ENCODE measurements at regions of chr6 and their contacts with region 1.

Region 1: DNA sequence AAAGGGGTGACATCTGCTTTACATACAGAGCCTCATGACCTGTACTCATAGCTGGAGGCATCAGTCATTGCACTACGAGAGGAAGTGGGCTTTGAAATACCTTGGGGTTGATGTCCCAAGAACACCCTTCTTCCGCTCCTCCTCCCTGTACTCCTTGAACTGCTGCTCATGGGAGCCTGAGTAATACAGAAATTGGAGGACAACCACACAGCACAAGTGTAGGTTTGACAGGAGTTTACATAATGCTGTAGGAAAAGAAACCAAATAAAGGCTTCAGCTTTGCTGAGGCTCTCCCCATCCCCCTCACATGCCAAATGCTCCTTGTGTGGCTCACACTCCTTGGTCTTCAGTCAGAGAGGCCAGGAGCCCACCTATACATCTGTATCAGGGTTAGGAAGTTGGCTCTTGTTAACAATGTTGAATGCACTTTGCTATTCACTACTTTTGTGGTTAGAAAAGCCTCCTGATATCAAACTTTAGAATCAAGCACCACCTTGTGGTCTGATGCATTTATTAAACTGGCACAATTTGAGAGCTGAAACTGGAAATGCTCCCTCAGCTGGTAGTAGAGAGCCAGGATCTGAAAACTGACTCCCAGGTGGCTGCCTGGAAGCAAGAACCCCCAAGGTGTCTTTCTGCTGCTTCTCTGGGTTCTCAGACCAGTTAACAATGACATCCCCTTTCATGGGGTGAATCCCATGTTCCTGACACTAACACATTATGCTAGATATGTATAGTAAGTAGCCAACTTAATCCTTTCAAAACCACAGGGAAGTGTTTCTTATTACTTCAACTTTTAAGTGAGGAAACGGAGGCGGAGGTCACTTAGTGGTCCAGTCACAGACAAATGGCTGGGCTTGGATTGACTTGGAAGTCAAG is 56.2 kb upstream of the EDN1 start:
- DNase-seq: peak; percentile 75
- ATAC-seq: peak; percentile 77
- H3K4me3 ChIP-seq: no peak overlapping the region
- H3K4me3 Mint-ChIP-seq: no peak overlapping the region
- H3K27ac ChIP-seq: no peak overlapping the region
- H3K27ac Mint-ChIP-seq: no peak overlapping the region
- H3K4me1 ChIP-seq: peaks cover 0 to 5% of the 10 kb centered on the region in 2 donors
- H3K4me1 Mint-ChIP-seq: peaks cover 10% of the 10 kb centered on the region
- H3K27me3 ChIP-seq: no peaks in the 10 kb centered on the region
- H3K27me3 Mint-ChIP-seq: no peaks in the 10 kb centered on the region
- CTCF ChIP-seq: peak; percentile 77

Region 2: DNA sequence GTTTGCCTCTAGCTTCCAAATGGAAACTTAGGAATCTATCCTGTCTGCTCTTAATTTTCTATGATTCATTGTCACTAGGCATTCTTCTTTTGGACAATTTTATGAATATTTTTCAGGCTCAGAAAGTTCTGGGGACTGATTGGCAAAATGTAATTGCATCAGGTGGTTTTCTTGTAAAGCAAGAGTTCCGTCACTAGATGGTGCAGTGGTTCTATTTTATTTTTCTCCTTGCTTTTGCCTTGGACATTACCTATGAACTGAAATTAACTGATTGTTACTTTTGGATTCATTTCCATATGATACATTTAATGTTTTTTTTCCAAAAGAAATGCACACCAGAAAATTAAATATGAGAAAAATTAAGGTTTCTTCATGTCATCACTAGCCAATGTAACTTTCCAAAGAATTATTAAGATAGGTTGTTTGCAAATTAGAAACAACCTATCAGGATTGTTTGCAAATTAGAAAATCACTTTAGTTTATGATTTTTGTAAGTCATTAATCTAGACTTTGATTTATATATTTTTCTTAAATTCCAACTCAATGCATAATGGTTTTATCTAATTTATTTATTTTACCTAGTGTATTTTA is 648.4 kb before region 1 on chr6:
- CTCF ChIA-PET with region 1: interaction called, 3 read pairs
- POLR2A ChIA-PET with region 1: no interaction called
- intact Hi-C with region 1: loop called (anchors 1 kb)
- DNase-seq: peak; percentile 28
- ATAC-seq: no peak
- H3K4me3 ChIP-seq: no peak overlapping the region
- H3K4me3 Mint-ChIP-seq: no peak overlapping the region
- H3K27ac ChIP-seq: no peak overlapping the region
- H3K27ac Mint-ChIP-seq: no peak overlapping the region
- H3K4me1 ChIP-seq: no peaks in the 10 kb centered on the region
- H3K4me1 Mint-ChIP-seq: no peaks in the 10 kb centered on the region
- H3K27me3 ChIP-seq: no peaks in the 10 kb centered on the region
- H3K27me3 Mint-ChIP-seq: peaks cover 4% of the 10 kb centered on the region
- CTCF ChIP-seq: peak; percentile 44

Region 3: DNA sequence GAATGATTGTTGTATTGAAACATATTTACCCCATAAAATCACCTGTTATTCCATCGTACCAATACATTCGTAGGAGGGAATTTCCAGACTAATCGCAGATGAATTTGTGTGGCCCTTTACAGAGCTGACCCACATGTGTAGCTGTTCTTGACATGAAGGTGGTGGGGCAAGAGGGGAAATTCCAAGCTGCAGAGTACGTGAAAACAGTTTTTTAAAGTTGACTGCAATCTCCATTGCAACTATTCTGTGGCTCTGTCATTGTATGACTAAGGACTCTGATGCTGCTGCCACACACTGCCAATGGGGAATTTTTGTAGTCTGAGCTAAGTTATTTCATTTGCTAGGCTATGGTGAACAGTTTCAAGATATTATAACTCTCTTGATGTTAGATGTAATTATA is 408.9 kb before region 1 on chr6:
- CTCF ChIA-PET with region 1: interaction called, 31 read pairs
- POLR2A ChIA-PET with region 1: no interaction called
- intact Hi-C with region 1: loop called (anchors 1 kb)
- DNase-seq: peak; percentile 28
- ATAC-seq: peak; percentile 56
- H3K4me3 ChIP-seq: no peak overlapping the region
- H3K4me3 Mint-ChIP-seq: no peak overlapping the region
- H3K27ac ChIP-seq: no peak overlapping the region
- H3K27ac Mint-ChIP-seq: no peak overlapping the region
- H3K4me1 ChIP-seq: peaks cover 14 to 16% of the 10 kb centered on the region in 2 donors
- H3K4me1 Mint-ChIP-seq: peaks cover 30% of the 10 kb centered on the region
- H3K27me3 ChIP-seq: no peaks in the 10 kb centered on the region
- H3K27me3 Mint-ChIP-seq: no peaks in the 10 kb centered on the region
- CTCF ChIP-seq: no peak

Region 4: GRCh38 chr6:12075067-12075563 is 158.8 kb before region 1 on chr6:
- CTCF ChIA-PET with region 1: interaction called, 17 read pairs
- POLR2A ChIA-PET with region 1: no interaction called
- intact Hi-C with region 1: no loop called
- DNase-seq: peak; percentile 43
- ATAC-seq: no peak
- H3K4me3 ChIP-seq: no peak overlapping the region
- H3K4me3 Mint-ChIP-seq: no peak overlapping the region
- H3K27ac ChIP-seq: no peak overlapping the region
- H3K27ac Mint-ChIP-seq: no peak overlapping the region
- H3K4me1 ChIP-seq: peaks cover 0 to 6% of the 10 kb centered on the region in 2 donors
- H3K4me1 Mint-ChIP-seq: peaks cover 25% of the 10 kb centered on the region
- H3K27me3 ChIP-seq: no peaks in the 10 kb centered on the region
- H3K27me3 Mint-ChIP-seq: no peaks in the 10 kb centered on the region
- CTCF ChIP-seq: peak; percentile 69

Region 5: DNA sequence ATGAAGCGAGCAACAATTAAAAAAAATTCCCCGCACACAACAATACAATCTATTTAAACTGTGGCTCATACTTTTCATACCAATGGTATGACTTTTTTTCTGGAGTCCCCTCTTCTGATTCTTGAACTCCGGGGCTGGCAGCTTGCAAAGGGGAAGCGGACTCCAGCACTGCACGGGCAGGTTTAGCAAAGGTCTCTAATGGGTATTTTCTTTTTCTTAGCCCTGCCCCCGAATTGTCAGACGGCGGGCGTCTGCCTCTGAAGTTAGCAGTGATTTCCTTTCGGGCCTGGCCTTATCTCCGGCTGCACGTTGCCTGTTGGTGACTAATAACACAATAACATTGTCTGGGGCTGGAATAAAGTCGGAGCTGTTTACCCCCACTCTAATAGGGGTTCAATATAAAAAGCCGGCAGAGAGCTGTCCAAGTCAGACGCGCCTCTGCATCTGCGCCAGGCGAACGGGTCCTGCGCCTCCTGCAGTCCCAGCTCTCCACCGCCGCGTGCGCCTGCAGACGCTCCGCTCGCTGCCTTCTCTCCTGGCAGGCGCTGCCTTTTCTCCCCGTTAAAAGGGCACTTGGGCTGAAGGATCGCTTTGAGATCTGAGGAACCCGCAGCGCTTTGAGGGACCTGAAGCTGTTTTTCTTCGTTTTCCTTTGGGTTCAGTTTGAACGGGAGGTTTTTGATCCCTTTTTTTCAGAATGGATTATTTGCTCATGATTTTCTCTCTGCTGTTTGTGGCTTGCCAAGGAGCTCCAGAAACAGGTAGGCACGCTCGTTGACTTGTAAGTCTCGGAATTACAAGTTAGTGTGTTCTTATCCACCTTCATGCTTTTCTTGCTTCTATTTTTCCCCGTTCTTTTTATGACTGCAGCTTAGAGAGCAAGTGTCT is 56.2 kb after region 1 on chr6 and contains the start of gene EDN1:
- CTCF ChIA-PET with region 1: interaction called, 3 read pairs
- POLR2A ChIA-PET with region 1: no interaction called
- intact Hi-C with region 1: loop called (anchors 1 kb)
- DNase-seq: peak; percentile 63
- ATAC-seq: peak; percentile 77
- H3K4me3 ChIP-seq: peak within 1 kb of the TSS; percentile 32 to 87 (median 55)
- H3K4me3 Mint-ChIP-seq: peak within 1 kb of the TSS; percentile 89
- H3K27ac ChIP-seq: no peak within 1 kb of the TSS
- H3K27ac Mint-ChIP-seq: no peak within 1 kb of the TSS
- H3K4me1 ChIP-seq: peaks cover 7 to 14% of the 10 kb centered on the region in 2 donors
- H3K4me1 Mint-ChIP-seq: peaks cover 17% of the 10 kb centered on the region
- H3K27me3 ChIP-seq: peaks cover 0 to 31% (median 18%) of the 10 kb centered on the region in 4 experiments
- H3K27me3 Mint-ChIP-seq: peaks cover 44% of the 10 kb centered on the region
- CTCF ChIP-seq: peak; percentile 10
- total RNA-seq, gene EDN1: 2.1 and 2.6 TPM in 2 replicates